CD4-positive, alpha-beta memory T cell (primary cell): ENCODE measurements at regions of chr15 and their contacts with region 1.

Region 1: GRCh38 chr15:40307421-40308211 is at the start of gene PLCB2:
- DNase-seq: peak; percentile 73 to 80 (median 76)
- H3K4me3 ChIP-seq: peak within 1 kb of the TSS; percentile 84 to 98
- H3K4me3 Mint-ChIP-seq: peak within 1 kb of the TSS; percentile 94 to 98 (median 96)
- H3K27ac ChIP-seq: peak within 1 kb of the TSS; percentile 79
- H3K27ac Mint-ChIP-seq: peak within 1 kb of the TSS; percentile 93 to 98 (median 96)
- H3K4me1 ChIP-seq: peaks cover 44% of the 10 kb centered on the region
- H3K4me1 Mint-ChIP-seq: peaks cover 28 to 68% (median 39%) of the 10 kb centered on the region in 4 donors
- H3K27me3 ChIP-seq: no peaks in the 10 kb centered on the region
- H3K27me3 Mint-ChIP-seq: no peaks in the 10 kb centered on the region
- total RNA-seq, gene PLCB2: 211 to 219 TPM

Region 2: DNA sequence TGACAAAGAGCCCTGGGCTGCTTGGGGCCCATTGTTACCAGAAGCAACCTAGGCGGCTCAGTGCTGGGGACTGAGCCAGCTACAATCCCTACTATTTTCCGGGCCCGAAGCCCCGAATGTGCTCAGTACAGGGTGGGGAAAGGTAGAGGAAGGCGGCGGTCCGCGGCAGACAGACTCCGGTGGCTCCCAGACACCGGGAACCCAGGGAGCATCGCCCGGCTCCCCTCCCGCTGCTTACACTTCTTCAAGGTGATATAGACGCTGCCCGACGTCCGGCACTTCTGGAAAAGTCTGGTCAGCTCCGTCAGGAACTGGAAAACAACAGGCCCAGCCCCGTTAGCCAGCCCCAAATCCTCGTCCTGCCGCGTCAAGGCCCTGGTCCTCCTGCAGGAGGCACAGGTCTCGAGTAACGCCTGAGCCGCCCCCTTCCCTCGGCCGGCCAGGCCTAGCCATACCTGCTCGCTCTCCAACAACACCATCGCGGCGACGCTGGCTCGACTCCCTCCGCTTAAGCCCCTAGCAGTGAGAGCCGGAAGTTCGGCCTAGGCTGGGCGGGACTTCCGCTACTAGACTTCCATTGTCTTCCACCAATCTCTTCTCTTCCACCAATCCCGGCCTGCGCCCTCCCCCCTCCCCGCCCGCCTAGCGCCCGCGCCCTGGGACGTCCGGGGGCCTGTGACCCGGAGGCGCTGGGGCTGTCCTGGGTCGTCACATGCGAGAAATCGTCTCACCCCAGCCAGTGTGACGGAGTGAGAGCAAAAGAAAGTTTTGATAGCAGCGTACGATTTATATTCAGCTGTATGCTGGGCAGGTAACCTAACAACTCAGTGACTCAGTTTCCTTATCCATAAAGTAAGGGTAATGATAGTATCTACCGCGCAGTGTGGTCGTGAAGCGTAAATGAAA is 268.7 kb before region 1 on chr15 and contains the start of gene SRP14:
- CTCF ChIA-PET with region 1: interaction called, 4 read pairs
- POLR2A ChIA-PET with region 1: interaction called, 16 read pairs
- intact Hi-C with region 1: no loop called
- DNase-seq: peak; percentile 89 to 95 (median 90)
- H3K4me3 ChIP-seq: peak within 1 kb of the TSS; percentile 42 to 97
- H3K4me3 Mint-ChIP-seq: peak within 1 kb of the TSS; percentile 96 to 100 (median 99)
- H3K27ac ChIP-seq: peak within 1 kb of the TSS; percentile 98
- H3K27ac Mint-ChIP-seq: peak within 1 kb of the TSS; percentile 87 to 99 (median 98)
- H3K4me1 ChIP-seq: peaks cover 24% of the 10 kb centered on the region
- H3K4me1 Mint-ChIP-seq: peaks cover 22 to 49% (median 33%) of the 10 kb centered on the region in 4 donors
- H3K27me3 ChIP-seq: no peaks in the 10 kb centered on the region
- H3K27me3 Mint-ChIP-seq: no peaks in the 10 kb centered on the region
- total RNA-seq, gene SRP14: 118 to 120 TPM

Region 3: GRCh38 chr15:40217159-40217824 is 90.3 kb before region 1 on chr15:
- CTCF ChIA-PET with region 1: interaction called, 18 read pairs
- POLR2A ChIA-PET with region 1: interaction called, 3 read pairs
- intact Hi-C with region 1: no loop called
- DNase-seq: peak; percentile 56 to 74 (median 69)
- H3K4me3 ChIP-seq: no peak overlapping the region
- H3K4me3 Mint-ChIP-seq: no peak overlapping the region
- H3K27ac ChIP-seq: no peak overlapping the region
- H3K27ac Mint-ChIP-seq: no peak overlapping the region
- H3K4me1 ChIP-seq: no peaks in the 10 kb centered on the region
- H3K4me1 Mint-ChIP-seq: no peaks in the 10 kb centered on the region
- H3K27me3 ChIP-seq: no peaks in the 10 kb centered on the region
- H3K27me3 Mint-ChIP-seq: no peaks in the 10 kb centered on the region

Region 4: GRCh38 chr15:40290918-40291574 is 16.6 kb before region 1 on chr15:
- CTCF ChIA-PET with region 1: interaction called, 94 read pairs
- POLR2A ChIA-PET with region 1: interaction called, 67 read pairs
- intact Hi-C with region 1: no loop called
- DNase-seq: no peak
- H3K4me3 ChIP-seq: no peak overlapping the region
- H3K4me3 Mint-ChIP-seq: no peak overlapping the region
- H3K27ac ChIP-seq: no peak overlapping the region
- H3K27ac Mint-ChIP-seq: no peak overlapping the region
- H3K4me1 ChIP-seq: no peaks in the 10 kb centered on the region
- H3K4me1 Mint-ChIP-seq: peaks cover 0 to 2% (median 0%) of the 10 kb centered on the region in 4 donors
- H3K27me3 ChIP-seq: no peaks in the 10 kb centered on the region
- H3K27me3 Mint-ChIP-seq: no peaks in the 10 kb centered on the region

Region 5: DNA sequence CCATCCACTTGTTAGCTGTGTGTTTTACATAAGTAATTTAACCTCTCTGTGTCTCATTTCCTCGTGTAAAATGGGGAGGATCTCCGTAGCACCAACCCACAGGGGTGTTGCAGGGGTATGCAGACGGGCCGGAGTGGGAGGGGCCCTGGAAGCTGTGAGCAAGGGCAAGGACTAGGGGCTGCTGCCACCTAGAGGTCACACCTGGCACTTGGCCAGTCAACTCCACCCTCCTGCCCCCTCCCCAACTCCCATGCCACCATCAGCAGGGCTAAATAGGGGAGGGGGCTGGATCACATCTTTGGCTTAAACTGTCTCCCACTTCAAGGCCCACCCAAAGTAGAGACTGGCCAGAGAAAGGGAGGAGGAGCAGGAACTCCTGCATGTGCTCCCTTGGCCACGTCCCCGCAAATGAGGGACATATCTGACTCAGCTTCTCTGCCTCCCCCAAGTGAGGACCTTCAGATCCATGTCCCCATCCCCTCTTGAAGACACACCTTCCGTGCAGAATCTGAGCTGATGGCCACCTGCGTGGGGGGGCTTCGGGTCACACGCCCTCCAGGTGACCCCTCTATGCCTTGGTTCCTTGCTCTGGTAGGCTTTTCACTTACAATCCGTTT is 30.5 kb after region 1 on chr15:
- CTCF ChIA-PET with region 1: interaction called, 634 read pairs
- POLR2A ChIA-PET with region 1: interaction called, 32 read pairs
- intact Hi-C with region 1: loop called (anchors 1 kb)
- DNase-seq: peak; percentile 69 to 72 (median 71)
- H3K4me3 ChIP-seq: no peak overlapping the region
- H3K4me3 Mint-ChIP-seq: peak overlapping the region in 1 of 8 donors; percentile 46
- H3K27ac ChIP-seq: no peak overlapping the region
- H3K27ac Mint-ChIP-seq: no peak overlapping the region
- H3K4me1 ChIP-seq: peaks cover 15% of the 10 kb centered on the region
- H3K4me1 Mint-ChIP-seq: peaks cover 7 to 16% (median 9%) of the 10 kb centered on the region in 4 donors
- H3K27me3 ChIP-seq: no peaks in the 10 kb centered on the region
- H3K27me3 Mint-ChIP-seq: peaks cover 0 to 2% of the 10 kb centered on the region in 2 donors

Region 6: GRCh38 chr15:40405501-40406381 is 98.1 kb after region 1 on chr15 and contains the start of gene IVD:
- CTCF ChIA-PET with region 1: interaction called, 6 read pairs
- POLR2A ChIA-PET with region 1: interaction called, 11 read pairs
- intact Hi-C with region 1: no loop called
- DNase-seq: peak; percentile 78 to 82 (median 80)
- H3K4me3 ChIP-seq: peak within 1 kb of the TSS; percentile 42 to 63
- H3K4me3 Mint-ChIP-seq: peak within 1 kb of the TSS; percentile 82 to 98 (median 90)
- H3K27ac ChIP-seq: peak within 1 kb of the TSS; percentile 61
- H3K27ac Mint-ChIP-seq: peak within 1 kb of the TSS; percentile 62 to 92 (median 86)
- H3K4me1 ChIP-seq: peaks cover 25% of the 10 kb centered on the region
- H3K4me1 Mint-ChIP-seq: peaks cover 24 to 35% (median 30%) of the 10 kb centered on the region in 4 donors
- H3K27me3 ChIP-seq: no peaks in the 10 kb centered on the region
- H3K27me3 Mint-ChIP-seq: no peaks in the 10 kb centered on the region
- total RNA-seq, gene IVD: 56.4 to 62.2 TPM